Activated CD8-positive, alpha-beta T cell treated with anti-CD3 and anti-CD28 coated beads for 36 hours (primary cell): ENCODE measurements at regions of chr14 and their contacts with region 1.

Region 1: GRCh38 chr14:80954687-80955299 is 628 bp upstream of the TSHR start:
- DNase-seq: peak; percentile 80
- ATAC-seq: peak; percentile 70
- H3K4me3 Mint-ChIP-seq: peak overlapping the region; percentile 74
- H3K27ac Mint-ChIP-seq: peak overlapping the region; percentile 68
- H3K4me1 Mint-ChIP-seq: peaks cover 39% of the 10 kb centered on the region
- H3K27me3 Mint-ChIP-seq: peaks cover 8% of the 10 kb centered on the region
- CTCF ChIP-seq: peak; percentile 91

Region 2: GRCh38 chr14:80973931-80974641 is 19.3 kb after region 1 on chr14:
- CTCF ChIA-PET with region 1: interaction called, 10 read pairs
- POLR2A ChIA-PET with region 1: interaction called, 5 read pairs
- intact Hi-C with region 1: no loop called
- DNase-seq: no peak
- ATAC-seq: peak; percentile 53
- H3K4me3 Mint-ChIP-seq: no peak overlapping the region
- H3K27ac Mint-ChIP-seq: no peak overlapping the region
- H3K4me1 Mint-ChIP-seq: peaks cover 14% of the 10 kb centered on the region
- H3K27me3 Mint-ChIP-seq: peaks cover 2% of the 10 kb centered on the region
- CTCF ChIP-seq: no peak

Region 3: DNA sequence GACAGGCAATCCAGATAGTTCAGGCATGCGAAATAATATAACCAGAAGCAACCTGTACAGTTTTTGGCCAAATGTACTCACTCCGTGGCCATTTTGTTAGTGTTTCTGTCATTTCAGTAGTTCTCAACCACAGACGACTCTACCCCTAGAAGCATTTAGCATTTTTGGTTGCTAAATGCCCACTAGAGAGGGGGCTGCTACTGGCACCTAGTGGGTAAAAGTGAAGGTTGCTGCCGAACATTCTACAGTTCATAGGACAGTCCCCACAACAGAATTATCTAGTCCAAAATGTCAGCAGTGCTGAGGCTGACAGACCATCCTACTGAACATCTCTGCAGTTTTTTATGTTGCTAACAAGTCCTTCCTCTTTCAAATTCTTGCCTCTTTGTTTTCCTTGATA is 108.0 kb after region 1 on chr14:
- CTCF ChIA-PET with region 1: no interaction called
- POLR2A ChIA-PET with region 1: no interaction called
- intact Hi-C with region 1: loop called (anchors 10 kb)
- DNase-seq: peak; percentile 54
- ATAC-seq: peak; percentile 84
- H3K4me3 Mint-ChIP-seq: no peak overlapping the region
- H3K27ac Mint-ChIP-seq: no peak overlapping the region
- H3K4me1 Mint-ChIP-seq: no peaks in the 10 kb centered on the region
- H3K27me3 Mint-ChIP-seq: peaks cover 4% of the 10 kb centered on the region
- CTCF ChIP-seq: peak; percentile 52

Region 4: DNA sequence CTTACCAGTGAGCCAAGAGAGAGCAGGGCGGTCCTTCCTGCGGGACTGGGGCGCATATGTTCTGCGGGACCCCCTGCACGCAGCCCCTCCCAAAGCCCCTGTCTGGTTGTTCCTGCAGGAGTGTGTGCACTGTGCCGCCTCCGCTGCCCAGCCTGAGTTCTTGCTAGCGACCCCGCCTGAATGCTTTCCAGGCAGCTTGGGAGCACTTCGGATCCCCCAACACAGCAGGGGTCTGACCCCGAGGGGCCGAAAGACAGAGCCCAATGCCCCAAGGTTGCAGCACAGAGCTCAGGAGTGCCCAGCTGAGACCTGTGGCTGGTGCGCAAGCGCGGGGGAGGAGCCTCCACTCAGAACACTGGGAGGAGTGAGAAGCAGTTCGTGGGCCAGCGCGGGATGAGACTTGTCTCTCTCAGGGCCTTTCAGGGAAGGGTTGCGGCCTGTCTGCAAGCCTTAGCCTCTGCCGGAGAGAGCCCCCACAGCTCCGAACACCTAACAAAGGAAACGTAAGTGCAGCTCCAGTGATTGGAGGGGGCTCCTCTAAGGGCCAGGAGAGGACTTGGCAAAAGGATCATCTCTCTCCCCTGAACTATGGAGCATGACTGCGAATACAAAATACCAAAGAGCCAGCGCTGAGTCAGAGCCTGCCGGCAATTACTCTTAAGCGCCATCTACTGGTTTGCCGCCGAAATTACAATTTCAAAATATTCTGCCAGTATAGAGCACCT is 215.5 kb after region 1 on chr14:
- CTCF ChIA-PET with region 1: interaction called, 14 read pairs
- POLR2A ChIA-PET with region 1: no interaction called
- intact Hi-C with region 1: loop called (anchors 1 kb)
- DNase-seq: peak; percentile 93
- ATAC-seq: peak; percentile 97
- H3K4me3 Mint-ChIP-seq: peak overlapping the region; percentile 90
- H3K27ac Mint-ChIP-seq: peak overlapping the region; percentile 95
- H3K4me1 Mint-ChIP-seq: peaks cover 15% of the 10 kb centered on the region
- H3K27me3 Mint-ChIP-seq: no peaks in the 10 kb centered on the region
- CTCF ChIP-seq: peak; percentile 86